ENCODE measurements at regions of chr3 and their contacts with region 1.

Region 1: DNA sequence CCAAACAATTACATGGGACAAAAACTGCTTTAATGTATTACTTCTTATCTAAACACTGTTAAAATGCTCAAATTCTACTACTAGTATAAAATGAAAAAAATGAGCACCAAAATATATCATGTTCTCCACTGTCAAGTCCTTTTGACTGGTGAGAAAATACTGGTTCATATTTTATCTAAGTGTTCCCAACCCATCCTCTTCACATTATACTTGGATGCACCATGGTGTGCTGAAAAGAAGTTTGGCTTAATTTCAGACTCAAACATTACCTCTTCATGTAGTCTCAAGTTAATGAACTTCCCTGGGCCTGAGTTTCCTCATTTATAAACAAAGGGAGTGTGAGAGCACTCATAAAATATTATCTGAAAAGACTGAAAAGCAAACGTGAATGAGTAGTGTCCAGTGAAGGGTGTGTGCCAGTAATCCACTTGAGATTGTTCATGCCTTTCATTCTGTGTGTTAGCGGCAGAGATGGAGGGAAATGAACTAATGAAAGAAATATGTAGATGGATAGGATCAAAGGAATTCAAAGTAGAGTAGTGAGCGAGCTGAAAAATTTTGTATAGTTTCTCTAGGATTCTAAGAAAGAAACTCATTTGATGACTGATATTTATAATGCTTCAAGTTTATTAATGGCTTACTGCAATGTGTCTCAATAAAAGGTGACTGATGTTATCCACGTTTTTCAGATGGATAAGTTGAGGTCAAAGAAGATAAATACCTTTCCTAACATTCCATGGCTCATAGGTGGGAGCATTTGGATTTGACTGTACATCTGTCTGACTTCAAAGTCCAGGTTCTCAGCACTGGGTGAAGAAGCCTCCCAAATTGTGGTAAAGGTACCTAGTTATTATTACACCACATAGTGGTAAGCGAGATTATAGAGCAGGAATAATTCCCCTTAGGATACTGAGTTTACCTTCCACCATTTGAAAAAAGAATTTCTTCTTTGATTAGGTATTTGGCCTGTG is 263.4 kb downstream of the NLGN1 start:
- DNase-seq: no peak
- ATAC-seq: peak; percentile 51 to 76 (median 68)
- H3K4me3 ChIP-seq: no peak overlapping the region
- H3K27ac ChIP-seq: peak overlapping the region in 5 of 12 donors; percentile 27 to 61 (median 36)
- H3K4me1 ChIP-seq: peaks cover 0 to 18% (median 2%) of the 10 kb centered on the region in 12 donors
- H3K27me3 ChIP-seq: no peaks in the 10 kb centered on the region
- CTCF ChIP-seq: no peak
- POLR2A ChIP-seq: no peak

Region 2: GRCh38 chr3:173617490-173617889 is 43.4 kb before region 1 on chr3:
- intact Hi-C with region 1: loop called in 1 of 10 experiments (anchors 5 kb)
- DNase-seq: peak; percentile 63 to 73 (median 72)
- ATAC-seq: peak; percentile 87 to 95 (median 93)
- H3K4me3 ChIP-seq: peak overlapping the region in 1 of 12 donors; percentile 16
- H3K27ac ChIP-seq: peak overlapping the region in 7 of 12 donors; percentile 36 to 65 (median 59)
- H3K4me1 ChIP-seq: peaks cover 0 to 26% (median 5%) of the 10 kb centered on the region in 12 donors
- H3K27me3 ChIP-seq: no peaks in the 10 kb centered on the region
- CTCF ChIP-seq: no peak
- POLR2A ChIP-seq: no peak

Measured in heart left ventricle (tissue), 16 donors.